Activated CD4-positive, alpha-beta memory T cell treated with anti-CD3 and anti-CD28 coated beads for 36 hours (primary cell): ENCODE measurements at regions of chr17 and their contacts with region 1.

Region 1: GRCh38 chr17:41665566-41666236 is 23.0 kb upstream of the EIF1 start:
- DNase-seq: peak; percentile 94
- H3K4me3 Mint-ChIP-seq: peak overlapping the region; percentile 76
- H3K27ac Mint-ChIP-seq: peak overlapping the region; percentile 95
- H3K4me1 Mint-ChIP-seq: peaks cover 42% of the 10 kb centered on the region
- H3K27me3 Mint-ChIP-seq: no peaks in the 10 kb centered on the region

Region 2: DNA sequence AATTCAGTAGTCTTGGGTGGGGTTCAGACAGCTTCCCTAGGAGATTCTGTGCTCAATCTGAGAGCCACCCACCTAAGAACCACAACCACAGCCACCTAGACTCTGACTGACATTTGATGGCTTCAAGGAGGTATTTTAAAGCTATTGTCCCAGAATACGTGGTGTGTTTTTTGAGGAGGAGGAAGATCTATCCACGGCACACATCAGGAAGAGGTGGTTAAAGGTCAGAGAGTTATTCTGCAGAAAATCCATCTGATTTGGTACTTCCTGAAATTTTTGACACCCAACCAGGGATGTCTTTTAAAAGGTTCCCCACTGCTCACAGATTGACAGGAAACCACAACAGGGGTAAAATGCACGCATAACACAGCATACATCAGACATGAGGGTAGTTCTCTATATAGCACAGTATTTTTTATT is 1043.2 kb before region 1 on chr17:
- CTCF ChIA-PET with region 1: interaction called, 6 read pairs
- POLR2A ChIA-PET with region 1: no interaction called
- intact Hi-C with region 1: loop called (anchors 10 kb)
- DNase-seq: peak; percentile 38
- H3K4me3 Mint-ChIP-seq: no peak overlapping the region
- H3K27ac Mint-ChIP-seq: no peak overlapping the region
- H3K4me1 Mint-ChIP-seq: peaks cover 60% of the 10 kb centered on the region
- H3K27me3 Mint-ChIP-seq: no peaks in the 10 kb centered on the region

Region 3: DNA sequence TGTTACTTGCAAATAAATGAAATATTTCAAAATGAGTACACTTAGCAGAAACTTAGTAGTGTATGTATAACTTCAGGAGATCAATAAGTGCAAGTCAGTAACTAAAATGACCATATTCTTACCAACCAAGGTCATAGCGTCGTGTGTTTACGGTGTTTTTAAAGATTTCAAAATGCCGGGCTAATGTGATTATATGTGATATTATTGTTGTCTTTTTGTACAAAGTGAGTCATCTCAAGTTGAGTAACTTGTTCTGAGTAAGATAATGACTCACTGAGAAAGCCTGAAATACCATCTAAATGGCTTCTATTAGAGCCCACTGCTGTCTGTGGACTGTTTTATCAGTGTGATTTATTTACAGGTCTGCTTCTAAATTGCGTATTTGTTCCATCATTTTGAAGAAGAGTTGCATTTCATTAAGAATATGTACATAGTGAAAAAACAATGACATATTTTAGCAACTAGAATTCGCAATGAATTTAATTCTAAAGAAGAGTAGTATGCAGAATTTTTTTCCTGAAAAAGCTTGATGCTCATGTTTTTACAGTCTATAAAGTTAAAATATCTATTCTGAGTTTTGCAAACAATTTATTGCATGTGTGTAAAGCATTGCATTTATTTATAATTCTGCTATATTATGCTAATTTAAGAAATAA is 811.4 kb before region 1 on chr17:
- CTCF ChIA-PET with region 1: interaction called, 68 read pairs
- POLR2A ChIA-PET with region 1: no interaction called
- intact Hi-C with region 1: loop called (anchors 5 kb)
- DNase-seq: no peak
- H3K4me3 Mint-ChIP-seq: no peak overlapping the region
- H3K27ac Mint-ChIP-seq: no peak overlapping the region
- H3K4me1 Mint-ChIP-seq: peaks cover 2% of the 10 kb centered on the region
- H3K27me3 Mint-ChIP-seq: peaks cover 6% of the 10 kb centered on the region

Region 4: DNA sequence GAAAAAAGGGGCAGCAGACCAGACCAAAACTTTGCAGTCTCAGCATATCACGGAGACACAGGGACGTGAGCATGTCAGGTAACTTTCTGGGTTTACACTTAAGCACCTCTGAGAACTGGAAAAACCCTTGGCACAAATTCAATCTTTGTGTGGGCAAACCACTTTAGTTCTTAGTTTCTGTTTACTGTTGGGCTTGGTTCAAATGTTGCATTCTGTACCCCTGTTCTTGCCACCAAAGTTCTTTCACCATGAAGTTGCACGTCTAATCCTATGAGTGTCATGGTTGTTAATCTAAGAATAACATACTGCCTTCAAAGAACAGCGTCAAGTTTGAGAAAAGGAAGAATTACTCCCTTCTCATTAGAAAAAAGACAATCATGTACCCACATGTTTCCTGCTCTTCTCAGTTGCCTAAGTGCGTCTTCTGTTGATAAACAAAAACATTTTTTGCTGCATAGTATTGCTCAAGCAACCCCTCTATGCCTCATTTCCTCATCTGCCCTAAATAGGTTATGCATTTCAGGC is 326.7 kb before region 1 on chr17:
- CTCF ChIA-PET with region 1: no interaction called
- POLR2A ChIA-PET with region 1: interaction called, 4 read pairs
- intact Hi-C with region 1: loop called (anchors 5 kb)
- DNase-seq: peak; percentile 43
- H3K4me3 Mint-ChIP-seq: no peak overlapping the region
- H3K27ac Mint-ChIP-seq: peak overlapping the region; percentile 68
- H3K4me1 Mint-ChIP-seq: peaks cover 80% of the 10 kb centered on the region
- H3K27me3 Mint-ChIP-seq: peaks cover 1% of the 10 kb centered on the region

Region 5: DNA sequence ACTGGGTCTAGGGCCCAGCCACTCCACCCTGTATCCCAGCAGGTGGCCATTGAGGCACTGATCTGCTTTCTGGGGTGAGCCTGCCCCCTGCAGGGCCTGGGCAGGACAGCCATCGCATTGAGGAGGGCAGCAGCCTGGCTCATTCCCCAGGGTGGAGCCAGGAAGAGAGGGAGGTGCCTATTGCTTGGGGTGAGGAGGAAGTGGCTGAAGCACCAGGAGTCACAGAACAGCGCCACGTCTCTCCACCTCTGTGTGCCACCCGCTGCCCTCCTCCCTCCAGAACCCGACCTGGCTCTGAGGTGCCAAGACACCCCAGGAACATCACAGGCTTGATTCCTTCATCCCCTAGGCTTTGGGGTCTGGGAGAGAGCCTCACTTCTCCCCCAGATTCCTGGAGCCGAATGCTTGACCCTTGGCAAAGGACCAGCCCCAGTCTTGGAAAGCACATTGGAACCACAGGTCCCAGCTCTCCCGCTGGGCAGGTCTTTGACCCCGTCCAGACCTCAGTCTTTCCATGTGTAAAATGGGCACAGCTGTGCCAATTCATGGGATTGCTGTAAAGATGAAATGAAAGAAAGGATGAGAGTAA is 168.8 kb before region 1 on chr17:
- CTCF ChIA-PET with region 1: interaction called, 11 read pairs
- POLR2A ChIA-PET with region 1: no interaction called
- intact Hi-C with region 1: no loop called
- DNase-seq: peak; percentile 89
- H3K4me3 Mint-ChIP-seq: no peak overlapping the region
- H3K27ac Mint-ChIP-seq: no peak overlapping the region
- H3K4me1 Mint-ChIP-seq: peaks cover 12% of the 10 kb centered on the region
- H3K27me3 Mint-ChIP-seq: no peaks in the 10 kb centered on the region

Region 6: DNA sequence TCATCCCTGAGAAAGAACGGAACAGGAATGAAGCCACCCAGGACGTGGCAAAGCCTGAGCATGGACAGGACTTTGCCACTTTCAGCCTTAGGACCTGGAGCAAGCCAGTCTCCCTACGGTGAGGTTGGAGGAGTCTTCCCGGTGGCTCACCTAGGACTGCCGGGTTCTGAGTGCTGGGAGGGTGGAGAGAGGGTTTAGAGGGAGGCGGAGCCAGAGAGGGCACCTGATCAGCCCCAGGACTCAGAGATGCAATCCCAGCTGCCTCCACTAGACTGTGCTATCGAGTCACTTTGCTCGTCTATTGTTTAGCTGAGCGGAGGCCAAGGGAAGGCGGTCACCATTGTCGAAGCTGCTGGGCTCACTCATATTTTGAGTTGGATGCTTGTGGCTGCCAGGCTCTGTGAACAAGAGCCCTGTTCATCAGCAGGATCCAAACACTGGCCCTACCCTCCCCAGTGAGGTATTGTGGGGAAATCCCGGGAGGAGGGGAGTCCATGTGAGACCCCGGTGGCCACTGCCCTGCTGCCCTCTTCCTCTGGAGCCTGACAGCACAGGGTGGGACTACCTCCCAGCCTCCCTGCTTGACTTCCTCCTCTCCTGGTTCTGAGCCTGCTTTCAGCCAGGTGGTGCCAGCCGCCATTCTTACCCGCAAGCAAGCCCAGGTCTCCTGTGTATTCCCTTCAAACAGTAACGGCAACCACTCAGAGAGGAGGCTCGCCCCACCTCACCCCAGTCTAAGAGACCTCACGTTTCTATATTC is 86.0 kb before region 1 on chr17:
- CTCF ChIA-PET with region 1: interaction called, 19 read pairs
- POLR2A ChIA-PET with region 1: no interaction called
- intact Hi-C with region 1: no loop called
- DNase-seq: peak; percentile 89
- H3K4me3 Mint-ChIP-seq: no peak overlapping the region
- H3K27ac Mint-ChIP-seq: no peak overlapping the region
- H3K4me1 Mint-ChIP-seq: no peaks in the 10 kb centered on the region
- H3K27me3 Mint-ChIP-seq: peaks cover 28% of the 10 kb centered on the region

Region 7: DNA sequence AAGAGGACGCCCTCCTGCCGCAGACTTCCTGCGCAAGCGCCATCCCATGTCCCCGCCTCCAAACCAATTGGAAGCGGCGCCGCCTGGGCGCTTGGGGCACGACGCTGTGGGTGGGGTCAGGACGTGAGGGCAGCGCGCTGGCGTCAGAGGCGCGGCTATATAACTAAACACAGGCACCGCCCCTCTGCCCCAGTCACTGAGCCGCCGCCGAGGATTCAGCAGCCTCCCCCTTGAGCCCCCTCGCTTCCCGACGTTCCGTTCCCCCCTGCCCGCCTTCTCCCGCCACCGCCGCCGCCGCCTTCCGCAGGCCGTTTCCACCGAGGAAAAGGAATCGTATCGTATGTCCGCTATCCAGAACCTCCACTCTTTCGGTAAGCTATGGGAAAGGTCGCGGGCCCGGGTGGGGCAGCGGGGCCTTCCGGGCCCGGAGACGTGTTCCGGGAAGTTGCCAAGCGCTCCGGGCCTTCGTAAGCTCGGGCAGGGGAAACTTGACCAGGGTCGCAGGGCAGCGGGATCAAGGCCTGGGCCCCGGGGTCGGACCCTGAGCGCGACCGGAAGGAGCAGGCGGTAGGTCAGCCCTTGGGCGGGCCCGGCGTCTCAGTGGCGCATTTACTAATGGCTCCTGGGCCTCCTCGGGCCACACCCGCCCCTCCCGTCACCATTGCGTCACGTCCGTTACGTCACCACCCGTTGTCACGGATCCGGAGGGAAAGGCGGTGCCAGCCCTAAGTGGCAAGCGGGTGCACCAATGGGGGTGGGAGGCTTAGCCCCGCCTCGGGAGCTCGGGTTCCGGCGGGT is 23.2 kb after region 1 on chr17 and contains the start of gene EIF1:
- CTCF ChIA-PET with region 1: interaction called, 197 read pairs
- POLR2A ChIA-PET with region 1: interaction called, 91 read pairs
- intact Hi-C with region 1: loop called (anchors 1 kb)
- DNase-seq: peak; percentile 100
- H3K4me3 Mint-ChIP-seq: peak within 1 kb of the TSS; percentile 95
- H3K27ac Mint-ChIP-seq: peak within 1 kb of the TSS; percentile 99
- H3K4me1 Mint-ChIP-seq: peaks cover 35% of the 10 kb centered on the region
- H3K27me3 Mint-ChIP-seq: no peaks in the 10 kb centered on the region
- total RNA-seq, gene EIF1: 1,052 to 1,072 TPM